Activated CD4-positive, alpha-beta memory T cell treated with anti-CD3 and anti-CD28 coated beads for 36 hours (primary cell): ENCODE measurements at regions of chr22 and their contacts with region 1.

Region 1: DNA sequence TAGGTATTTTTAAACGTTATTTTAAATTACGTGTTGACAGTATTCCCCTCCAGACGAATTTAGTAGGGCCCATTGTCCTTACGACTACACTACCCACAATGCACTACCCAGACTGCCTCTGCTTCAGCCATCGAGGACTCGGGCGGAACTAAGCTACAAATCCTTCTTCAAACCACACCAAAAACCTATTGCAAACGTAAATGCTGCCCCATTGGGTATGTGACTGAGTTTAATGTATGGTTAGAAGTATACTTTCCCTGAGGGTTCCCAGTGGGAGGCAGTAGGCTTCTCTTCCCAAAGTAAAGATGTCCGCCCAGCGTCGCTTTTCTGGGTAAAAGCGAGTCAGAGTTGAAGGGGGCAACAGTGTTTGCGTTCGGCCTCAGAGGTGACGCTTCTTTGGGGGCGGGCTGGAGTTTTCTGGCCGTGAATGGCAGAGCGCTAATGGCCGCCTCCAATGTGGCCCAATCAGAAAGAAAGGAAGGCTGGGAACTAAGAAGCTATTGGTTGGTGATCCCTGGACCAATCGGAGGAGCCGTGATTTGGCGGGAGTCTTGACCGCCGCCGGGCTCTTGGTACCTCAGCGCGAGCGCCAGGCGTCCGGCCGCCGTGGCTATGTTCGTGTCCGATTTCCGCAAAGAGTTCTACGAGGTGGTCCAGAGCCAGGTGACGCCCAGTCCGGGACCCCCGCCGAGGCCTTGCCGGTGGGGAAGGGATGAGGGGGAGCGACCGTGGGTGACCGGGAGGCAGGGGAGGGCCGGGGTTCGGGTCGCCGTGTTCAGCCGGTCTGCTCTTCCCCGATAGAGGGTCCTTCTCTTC is at the start of gene CDC45:
- DNase-seq: peak; percentile 97
- H3K4me3 Mint-ChIP-seq: peak within 1 kb of the TSS; percentile 99
- H3K27ac Mint-ChIP-seq: peak within 1 kb of the TSS; percentile 98
- H3K4me1 Mint-ChIP-seq: peaks cover 41% of the 10 kb centered on the region
- H3K27me3 Mint-ChIP-seq: no peaks in the 10 kb centered on the region
- total RNA-seq, gene CDC45: 122 to 130 TPM

Region 2: GRCh38 chr22:19143967-19144400 is 335.6 kb before region 1 on chr22:
- CTCF ChIA-PET with region 1: interaction called, 4 read pairs
- POLR2A ChIA-PET with region 1: interaction called, 3 read pairs
- intact Hi-C with region 1: loop called (anchors 1 kb)
- DNase-seq: peak; percentile 64
- H3K4me3 Mint-ChIP-seq: peak overlapping the region; percentile 99
- H3K27ac Mint-ChIP-seq: peak overlapping the region; percentile 91
- H3K4me1 Mint-ChIP-seq: peaks cover 17% of the 10 kb centered on the region
- H3K27me3 Mint-ChIP-seq: peaks cover 6% of the 10 kb centered on the region

Region 3: GRCh38 chr22:19291580-19292457 is 187.7 kb before region 1 on chr22 and contains the start of gene CLTCL1:
- CTCF ChIA-PET with region 1: no interaction called
- POLR2A ChIA-PET with region 1: no interaction called
- intact Hi-C with region 1: loop called (anchors 2 kb)
- DNase-seq: peak; percentile 77
- H3K4me3 Mint-ChIP-seq: peak within 1 kb of the TSS; percentile 85
- H3K27ac Mint-ChIP-seq: peak within 1 kb of the TSS; percentile 62
- H3K4me1 Mint-ChIP-seq: peaks cover 16% of the 10 kb centered on the region
- H3K27me3 Mint-ChIP-seq: peaks cover 23% of the 10 kb centered on the region
- total RNA-seq, gene CLTCL1: 1.1 to 1.6 TPM

Region 4: GRCh38 chr22:19447388-19448075 is 32.0 kb before region 1 on chr22 and contains the start of gene C22orf39:
- CTCF ChIA-PET with region 1: interaction called, 4 read pairs
- POLR2A ChIA-PET with region 1: interaction called, 5 read pairs
- intact Hi-C with region 1: loop called (anchors 1 kb)
- DNase-seq: peak; percentile 93
- H3K4me3 Mint-ChIP-seq: peak within 1 kb of the TSS; percentile 94
- H3K27ac Mint-ChIP-seq: peak within 1 kb of the TSS; percentile 91
- H3K4me1 Mint-ChIP-seq: peaks cover 47% of the 10 kb centered on the region
- H3K27me3 Mint-ChIP-seq: no peaks in the 10 kb centered on the region
- total RNA-seq, gene C22orf39: 23.3 to 23.5 TPM

Region 5: GRCh38 chr22:19497245-19497644 is 17.7 kb after region 1 on chr22:
- CTCF ChIA-PET with region 1: no interaction called
- POLR2A ChIA-PET with region 1: no interaction called
- intact Hi-C with region 1: no loop called
- DNase-seq: no peak
- H3K4me3 Mint-ChIP-seq: no peak overlapping the region
- H3K27ac Mint-ChIP-seq: no peak overlapping the region
- H3K4me1 Mint-ChIP-seq: peaks cover 13% of the 10 kb centered on the region
- H3K27me3 Mint-ChIP-seq: no peaks in the 10 kb centered on the region

Region 6: GRCh38 chr22:19607192-19608002 is 127.8 kb after region 1 on chr22:
- CTCF ChIA-PET with region 1: no interaction called
- POLR2A ChIA-PET with region 1: no interaction called
- intact Hi-C with region 1: loop called (anchors 1 kb)
- DNase-seq: peak; percentile 81
- H3K4me3 Mint-ChIP-seq: peak overlapping the region; percentile 32
- H3K27ac Mint-ChIP-seq: peak overlapping the region; percentile 54
- H3K4me1 Mint-ChIP-seq: peaks cover 56% of the 10 kb centered on the region
- H3K27me3 Mint-ChIP-seq: no peaks in the 10 kb centered on the region